ENCODE measurements at regions of chr1 and their contacts with region 1.

Region 1: DNA sequence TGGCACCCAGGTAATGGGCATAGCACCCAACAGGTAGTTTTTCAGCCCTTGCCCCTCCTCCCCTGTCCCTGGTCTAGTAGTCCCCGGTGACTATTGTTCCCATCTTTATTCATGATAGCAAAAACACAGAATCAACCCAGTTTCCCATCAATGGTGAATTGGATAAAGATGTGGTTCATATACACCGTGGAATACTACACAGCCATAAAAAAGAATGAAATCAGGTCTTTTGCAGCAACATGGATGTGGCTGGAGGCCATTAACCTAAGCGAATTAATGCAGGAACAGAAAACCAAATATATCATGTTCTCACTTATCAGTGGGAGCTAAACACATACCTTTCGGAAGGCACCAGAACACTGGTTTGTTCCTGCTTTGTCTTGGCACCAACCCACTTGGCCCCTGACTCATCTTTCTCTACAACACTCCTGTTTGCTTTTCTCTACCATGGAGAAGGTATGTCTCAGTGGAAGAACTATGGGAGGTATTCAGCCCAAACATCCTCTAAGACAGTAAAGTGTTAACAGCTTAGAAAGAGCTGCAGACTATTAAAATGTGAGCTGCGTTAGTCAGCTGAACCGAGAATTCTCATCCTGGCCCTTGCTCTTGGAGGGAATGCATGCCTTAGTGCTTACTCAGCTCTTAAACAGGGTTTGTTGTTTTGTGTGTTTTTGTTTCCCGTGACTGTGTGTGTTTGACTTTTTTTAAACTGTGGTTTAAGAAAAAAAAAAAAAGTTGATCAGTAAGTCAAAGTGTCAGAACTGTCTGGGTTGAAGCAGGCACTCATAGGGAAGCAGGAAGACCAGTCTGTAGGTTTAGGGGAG is 203.0 kb downstream of the TOMM20 start:
- DNase-seq: no peak
- ATAC-seq: peak; percentile 17
- H3K4me3 Mint-ChIP-seq: peak overlapping the region; percentile 59
- H3K27ac Mint-ChIP-seq: peak overlapping the region; percentile 90
- H3K4me1 Mint-ChIP-seq: peaks cover 61% of the 10 kb centered on the region
- H3K27me3 Mint-ChIP-seq: no peaks in the 10 kb centered on the region

Region 2: GRCh38 chr1:234912548-234913277 is 12.9 kb before region 1 on chr1:
- CTCF ChIA-PET with region 1: interaction called, 17 read pairs
- POLR2A ChIA-PET with region 1: no interaction called
- DNase-seq: no peak
- ATAC-seq: no peak
- H3K4me3 Mint-ChIP-seq: no peak overlapping the region
- H3K27ac Mint-ChIP-seq: peak overlapping the region; percentile 41
- H3K4me1 Mint-ChIP-seq: peaks cover 36% of the 10 kb centered on the region
- H3K27me3 Mint-ChIP-seq: no peaks in the 10 kb centered on the region

Region 3: GRCh38 chr1:234963180-234963903 is 37.7 kb after region 1 on chr1:
- CTCF ChIA-PET with region 1: interaction called, 3 read pairs
- POLR2A ChIA-PET with region 1: interaction called, 13 read pairs
- DNase-seq: peak; percentile 94
- ATAC-seq: peak; percentile 84
- H3K4me3 Mint-ChIP-seq: peak overlapping the region; percentile 66
- H3K27ac Mint-ChIP-seq: peak overlapping the region; percentile 93
- H3K4me1 Mint-ChIP-seq: peaks cover 71% of the 10 kb centered on the region
- H3K27me3 Mint-ChIP-seq: no peaks in the 10 kb centered on the region

Measured in activated CD8-positive, alpha-beta T cell treated with anti-CD3 and anti-CD28 coated beads, Interleukin-2, amount 10 ng/mL, durations not matched to agents 7 days and 5 days (primary cell).